A549 (cell line): ENCODE measurements at regions of chr2 and their contacts with region 1.

Region 1: DNA sequence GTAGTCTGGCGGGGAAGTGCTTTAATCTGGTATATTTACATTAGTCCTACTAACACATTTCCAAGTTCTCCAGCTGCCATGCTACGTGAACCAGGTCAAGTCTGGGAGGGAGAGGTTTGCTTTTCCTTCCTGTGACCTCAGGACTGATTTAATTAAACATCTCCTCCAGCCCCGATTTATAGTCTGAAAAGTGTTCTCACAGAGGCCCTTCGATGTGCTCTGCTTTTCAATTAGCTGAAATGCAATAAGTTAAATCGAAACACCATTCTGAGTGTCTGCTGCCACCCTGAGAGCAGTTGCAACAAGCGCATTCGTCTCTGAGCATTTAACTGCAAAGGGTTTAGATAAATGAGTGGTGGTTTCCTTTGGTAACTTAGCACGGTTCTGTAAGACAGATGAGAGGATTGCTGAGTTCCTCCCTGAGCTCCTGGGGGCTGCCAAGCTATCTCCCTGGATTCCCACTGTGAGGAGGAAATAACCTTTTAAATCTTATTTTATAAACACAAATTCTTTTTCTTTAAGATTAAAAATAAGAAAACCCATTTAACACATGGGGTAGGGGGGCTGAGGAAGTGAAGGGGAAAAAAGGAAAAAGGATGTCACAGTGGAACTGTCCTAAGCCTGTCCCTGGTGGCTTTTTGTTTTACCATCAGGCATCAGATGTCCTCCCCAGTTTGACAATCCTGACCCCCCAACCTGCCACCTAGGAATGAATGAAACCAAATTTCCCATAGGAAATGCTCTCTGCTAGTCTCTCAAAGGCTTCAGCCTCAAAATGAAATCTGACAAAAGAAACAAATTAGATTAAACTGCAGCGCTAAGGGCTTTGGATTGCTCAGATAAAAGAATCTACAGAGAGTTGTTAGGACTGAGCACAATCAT is 56.5 kb upstream of the CREB1 start:
- DNase-seq: peak in 1 of 2 experiments; percentile 77
- ATAC-seq: peak; percentile 79 to 84
- H3K4me3 ChIP-seq: peak overlapping the region; percentile 24; the same call in 2 of the 3 replicates
- H3K27ac ChIP-seq: peak overlapping the region; percentile 70 to 81
- H3K4me1 ChIP-seq: peaks cover 19% of the 10 kb centered on the region
- CTCF ChIP-seq: peak; percentile 91
- EP300 ChIP-seq: no peak
- POLR2A ChIP-seq: no peak
- RAD21 ChIP-seq: peak; percentile 98

Region 2: DNA sequence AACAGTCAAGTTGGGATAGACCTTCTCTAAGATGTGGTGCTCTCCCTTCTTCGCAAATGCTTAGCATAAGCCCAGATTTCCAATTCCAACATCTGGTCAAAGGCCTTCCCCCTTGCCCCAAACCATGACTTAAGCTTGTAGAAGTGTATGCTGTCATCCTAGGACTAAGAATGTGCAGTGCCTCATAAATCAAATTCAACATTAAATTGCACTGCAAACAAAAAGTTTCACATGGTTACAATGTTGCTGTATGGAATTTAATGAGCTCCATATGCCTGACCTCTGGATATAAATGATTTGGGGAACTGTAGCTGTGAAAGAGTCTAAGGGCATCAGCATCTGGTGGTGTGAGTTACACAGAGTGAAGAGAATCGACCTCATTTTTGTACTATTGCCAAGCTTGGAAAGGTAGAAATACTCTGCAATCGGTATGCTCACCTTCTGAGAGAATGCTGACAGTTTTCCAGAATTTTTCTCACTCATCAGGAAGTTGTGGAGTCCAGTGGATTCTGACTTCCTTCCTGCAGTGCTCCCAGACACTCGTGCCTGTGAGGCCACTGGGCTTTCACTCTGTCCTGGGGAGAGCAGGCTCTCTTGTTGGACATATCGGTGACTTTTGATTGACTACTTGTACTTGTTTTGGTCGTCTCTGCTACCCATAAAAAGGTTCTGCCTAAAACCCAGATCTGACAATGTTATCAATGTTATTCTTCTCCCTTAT is 667.2 kb before region 1 on chr2:
- CTCF ChIA-PET with region 1: interaction called, 44 read pairs
- POLR2A ChIA-PET with region 1: no interaction called
- DNase-seq: no peak
- ATAC-seq: no peak; a peak in 1 of 6 replicates
- H3K4me3 ChIP-seq: no peak overlapping the region
- H3K27ac ChIP-seq: no peak overlapping the region
- H3K4me1 ChIP-seq: no peaks in the 10 kb centered on the region
- CTCF ChIP-seq: no peak
- EP300 ChIP-seq: no peak
- POLR2A ChIP-seq: no peak
- RAD21 ChIP-seq: no peak

Region 3: GRCh38 chr2:206989306-206989705 is 484.0 kb before region 1 on chr2:
- CTCF ChIA-PET with region 1: interaction called, 63 read pairs
- POLR2A ChIA-PET with region 1: no interaction called
- DNase-seq: peak; percentile 25 to 39
- ATAC-seq: peak; percentile 81 to 98
- H3K4me3 ChIP-seq: no peak overlapping the region
- H3K27ac ChIP-seq: no peak overlapping the region
- H3K4me1 ChIP-seq: no peaks in the 10 kb centered on the region
- CTCF ChIP-seq: peak; percentile 51
- EP300 ChIP-seq: no peak
- POLR2A ChIP-seq: no peak
- RAD21 ChIP-seq: peak; percentile 38 to 51; a peak in 4 of 5 replicates

Region 4: DNA sequence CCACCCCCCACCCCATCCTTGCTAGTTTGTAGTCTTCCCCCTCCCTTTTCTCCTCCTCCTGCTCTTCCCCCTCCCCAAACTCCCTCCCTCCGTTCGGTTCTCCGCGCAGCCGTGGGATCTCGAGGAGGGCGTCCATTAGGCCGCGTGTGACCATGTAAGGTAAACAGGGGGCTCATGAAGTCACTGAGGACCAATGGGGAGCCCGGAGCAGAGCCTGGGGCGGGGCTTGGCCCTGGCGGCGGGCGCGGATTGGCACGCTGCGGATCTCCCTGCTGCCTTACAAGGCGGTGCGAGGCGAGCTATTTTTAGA is 307.3 kb before region 1 on chr2:
- CTCF ChIA-PET with region 1: interaction called, 15 read pairs
- POLR2A ChIA-PET with region 1: interaction called, 12 read pairs
- DNase-seq: peak; percentile 94 to 100
- ATAC-seq: peak; percentile 78 to 87
- H3K4me3 ChIP-seq: peak overlapping the region; percentile 76
- H3K27ac ChIP-seq: peak overlapping the region; percentile 97 to 100
- H3K4me1 ChIP-seq: peaks cover 29% of the 10 kb centered on the region
- CTCF ChIP-seq: no peak
- EP300 ChIP-seq: no peak
- POLR2A ChIP-seq: no peak
- RAD21 ChIP-seq: no peak; a peak in 1 of 5 replicates

Region 5: GRCh38 chr2:207334624-207335371 is 138.5 kb before region 1 on chr2:
- CTCF ChIA-PET with region 1: interaction called, 19 read pairs
- POLR2A ChIA-PET with region 1: no interaction called
- DNase-seq: peak; percentile 72 to 88
- ATAC-seq: peak; percentile 84 to 89
- H3K4me3 ChIP-seq: peak overlapping the region; percentile 19
- H3K27ac ChIP-seq: peak overlapping the region; percentile 87 to 88
- H3K4me1 ChIP-seq: peaks cover 74% of the 10 kb centered on the region
- CTCF ChIP-seq: no peak
- EP300 ChIP-seq: peak in 1 of 2 experiments; percentile 41; a peak in 1 of 5 replicates
- POLR2A ChIP-seq: no peak
- RAD21 ChIP-seq: peak; percentile 7 to 20; a peak in 1 of 5 replicates

Region 6: GRCh38 chr2:207352978-207353671 is 120.2 kb before region 1 on chr2:
- CTCF ChIA-PET with region 1: no interaction called
- POLR2A ChIA-PET with region 1: no interaction called
- DNase-seq: no peak
- ATAC-seq: peak; percentile 34 to 61; a peak in 4 of 6 replicates
- H3K4me3 ChIP-seq: no peak overlapping the region
- H3K27ac ChIP-seq: peak overlapping the region in 1 of 2 experiments; percentile 15; a peak in 1 of 6 replicates
- H3K4me1 ChIP-seq: 0 out of 3 replicates have a peak, but pooled peaks cover 3% of the 10 kb centered on the region
- CTCF ChIP-seq: no peak
- EP300 ChIP-seq: no peak
- POLR2A ChIP-seq: no peak
- RAD21 ChIP-seq: no peak

Region 7: GRCh38 chr2:207692206-207693065 is 219.1 kb after region 1 on chr2:
- CTCF ChIA-PET with region 1: no interaction called
- POLR2A ChIA-PET with region 1: no interaction called
- DNase-seq: peak; percentile 50 to 74
- ATAC-seq: peak; percentile 71 to 89; a peak in 5 of 6 replicates
- H3K4me3 ChIP-seq: no peak overlapping the region
- H3K27ac ChIP-seq: peak overlapping the region in 1 of 2 experiments; percentile 12; a peak in 1 of 6 replicates
- H3K4me1 ChIP-seq: peaks cover 20% of the 10 kb centered on the region
- CTCF ChIP-seq: peak; percentile 58
- EP300 ChIP-seq: no peak
- POLR2A ChIP-seq: no peak
- RAD21 ChIP-seq: peak; percentile 32 to 63; a peak in 4 of 5 replicates

Region 8: GRCh38 chr2:208204166-208204565 is 730.9 kb after region 1 on chr2:
- CTCF ChIA-PET with region 1: no interaction called
- POLR2A ChIA-PET with region 1: no interaction called
- DNase-seq: no peak
- ATAC-seq: no peak
- H3K4me3 ChIP-seq: no peak overlapping the region
- H3K27ac ChIP-seq: no peak overlapping the region
- H3K4me1 ChIP-seq: no peaks in the 10 kb centered on the region
- CTCF ChIP-seq: no peak
- EP300 ChIP-seq: no peak
- POLR2A ChIP-seq: no peak
- RAD21 ChIP-seq: no peak